Activated T-helper 1 cell treated with anti-CD3 and anti-CD28 coated beads, Interleukin-12 subunit alpha, Interleukin-12 subunit beta, Interleukin-2, Interleukin-4 antibody, amounts not matched to agents 30 ng/mL and 10 ng/mL and 1 ng/mL, durations not matched to agents 14 hours and 24 hours and 36 hours (primary cell): ENCODE measurements at regions of chr12 and their contacts with region 1.

Region 1: DNA sequence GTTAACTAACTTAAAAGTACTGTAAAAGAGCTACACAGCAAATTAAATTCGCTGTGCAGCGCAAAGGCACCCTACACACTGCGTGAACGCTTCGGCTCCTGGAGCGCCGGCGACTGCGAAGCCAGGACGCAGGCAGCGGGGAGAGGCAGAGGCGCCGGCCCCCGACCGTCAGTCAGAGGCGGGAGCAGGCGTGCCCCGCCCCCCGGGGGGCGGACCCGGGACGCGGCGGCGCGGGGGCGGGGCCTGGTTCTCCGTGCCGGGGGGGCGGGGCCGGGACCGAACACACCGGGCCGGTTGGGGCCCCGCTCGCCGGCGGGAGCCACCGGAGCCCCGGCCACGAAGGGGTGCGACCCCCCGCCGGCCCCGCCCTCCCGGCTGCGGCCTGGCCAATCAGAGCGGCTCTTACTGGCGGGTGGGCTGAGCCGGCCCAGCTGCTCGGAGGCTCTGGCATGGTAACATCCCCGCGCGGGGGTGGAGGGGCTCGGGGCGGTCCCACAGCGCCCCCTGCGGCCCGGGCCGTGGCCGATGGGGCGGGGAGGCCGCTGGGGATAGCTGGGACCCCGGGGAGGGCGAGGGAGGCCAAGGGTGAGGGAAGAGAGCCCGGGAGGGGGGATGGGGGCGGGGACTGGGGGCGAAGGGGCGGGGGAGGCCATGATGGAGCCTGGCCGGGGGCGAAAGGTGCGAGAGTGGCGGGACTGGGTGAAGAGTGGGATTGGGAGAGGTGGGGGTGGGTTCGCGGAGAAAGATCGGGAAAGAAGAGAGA is at the start of gene PRPF40B:
- DNase-seq: peak; percentile 81
- H3K4me3 Mint-ChIP-seq: peak within 1 kb of the TSS; percentile 83
- H3K27ac Mint-ChIP-seq: peak within 1 kb of the TSS; percentile 81
- H3K4me1 Mint-ChIP-seq: peaks cover 26% of the 10 kb centered on the region
- H3K27me3 Mint-ChIP-seq: peaks cover 18% of the 10 kb centered on the region
- total RNA-seq, gene PRPF40B: 10.4 and 12.7 TPM in 2 replicates

Region 2: DNA sequence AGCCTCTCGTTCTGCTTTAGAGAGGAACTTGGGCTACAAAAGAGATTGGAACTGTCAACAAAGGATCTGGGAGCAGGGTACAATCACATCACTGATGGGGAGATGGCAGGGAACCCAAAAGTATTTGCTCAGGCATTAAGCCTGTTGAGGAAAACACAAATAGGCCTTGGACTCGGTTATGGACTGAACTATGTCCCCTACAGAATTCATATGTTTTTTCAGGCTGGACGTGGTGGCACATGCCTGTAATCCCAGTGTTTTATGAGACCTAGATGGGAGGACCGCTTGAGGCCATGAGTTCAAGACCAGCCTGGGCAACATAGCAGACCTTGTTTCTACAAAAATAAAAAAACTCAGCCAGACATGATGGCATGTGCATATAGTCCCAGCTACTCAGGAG is 785.3 kb before region 1 on chr12:
- intact Hi-C with region 1: no loop called
- DNase-seq: no peak
- H3K4me3 Mint-ChIP-seq: no peak overlapping the region
- H3K27ac Mint-ChIP-seq: no peak overlapping the region
- H3K4me1 Mint-ChIP-seq: no peaks in the 10 kb centered on the region
- H3K27me3 Mint-ChIP-seq: no peaks in the 10 kb centered on the region

Region 3: DNA sequence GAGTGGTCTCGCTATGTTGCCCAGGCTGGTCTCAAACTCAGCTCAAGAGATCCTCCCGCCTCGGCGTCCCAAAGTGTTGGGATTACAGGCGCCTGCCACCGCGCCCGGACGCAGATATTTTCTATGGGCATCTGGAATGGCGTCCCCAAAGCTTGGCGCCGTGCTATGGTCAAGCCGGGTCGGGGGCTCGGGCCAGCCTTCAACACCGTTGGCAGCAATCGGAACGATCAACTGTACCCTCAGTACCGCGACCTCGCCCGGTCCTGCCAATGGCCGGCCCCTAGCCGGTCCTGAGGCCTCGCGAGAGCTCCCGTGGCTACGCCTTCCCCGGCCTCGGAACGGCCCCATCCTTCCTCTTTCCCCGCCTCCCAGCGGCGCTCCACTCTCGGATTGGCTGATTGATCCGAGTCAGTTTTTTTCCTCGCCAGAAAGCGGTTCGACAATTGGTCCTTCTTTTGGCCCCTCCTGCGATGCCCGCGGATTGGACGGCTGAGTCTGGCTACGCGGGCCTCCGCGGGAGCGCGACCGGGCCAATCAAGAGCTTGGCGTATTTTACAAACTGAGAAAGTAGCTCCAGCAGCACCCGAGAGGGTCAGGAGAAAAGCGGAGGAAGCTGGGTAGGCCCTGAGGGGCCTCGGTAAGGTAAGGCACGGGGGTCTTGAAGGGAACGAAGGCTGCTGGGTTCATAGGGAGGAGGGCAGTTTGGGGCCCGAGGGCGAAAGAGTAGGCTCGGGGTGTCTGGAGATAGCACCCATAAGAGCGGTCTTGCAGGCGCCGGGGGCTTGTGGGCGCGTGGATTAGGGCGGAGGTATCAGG is 300.4 kb before region 1 on chr12 and contains the start of gene TROAP:
- intact Hi-C with region 1: loop called (anchors 1 kb)
- DNase-seq: peak; percentile 97
- H3K4me3 Mint-ChIP-seq: peak within 1 kb of the TSS; percentile 96
- H3K27ac Mint-ChIP-seq: peak within 1 kb of the TSS; percentile 94
- H3K4me1 Mint-ChIP-seq: peaks cover 28% of the 10 kb centered on the region
- H3K27me3 Mint-ChIP-seq: peaks cover 4% of the 10 kb centered on the region
- total RNA-seq, gene TROAP: 46.0 TPM in 2 replicates

Region 4: GRCh38 chr12:49538510-49539403 is 84.6 kb before region 1 on chr12 and contains the start of gene KCNH3:
- intact Hi-C with region 1: loop called (anchors 5 kb)
- DNase-seq: peak; percentile 80
- H3K4me3 Mint-ChIP-seq: peak within 1 kb of the TSS; percentile 70
- H3K27ac Mint-ChIP-seq: no peak within 1 kb of the TSS
- H3K4me1 Mint-ChIP-seq: no peaks in the 10 kb centered on the region
- H3K27me3 Mint-ChIP-seq: peaks cover 49% of the 10 kb centered on the region
- total RNA-seq, gene KCNH3: 0.93 and 1.6 TPM in 2 replicates

Region 5: GRCh38 chr12:49577589-49578315 is 45.6 kb before region 1 on chr12:
- intact Hi-C with region 1: no loop called
- DNase-seq: no peak
- H3K4me3 Mint-ChIP-seq: no peak overlapping the region
- H3K27ac Mint-ChIP-seq: no peak overlapping the region
- H3K4me1 Mint-ChIP-seq: peaks cover 23% of the 10 kb centered on the region
- H3K27me3 Mint-ChIP-seq: no peaks in the 10 kb centered on the region

Region 6: GRCh38 chr12:49588721-49589516 is 34.4 kb before region 1 on chr12:
- intact Hi-C with region 1: no loop called
- DNase-seq: no peak
- H3K4me3 Mint-ChIP-seq: no peak overlapping the region
- H3K27ac Mint-ChIP-seq: no peak overlapping the region
- H3K4me1 Mint-ChIP-seq: no peaks in the 10 kb centered on the region
- H3K27me3 Mint-ChIP-seq: no peaks in the 10 kb centered on the region

Region 7: DNA sequence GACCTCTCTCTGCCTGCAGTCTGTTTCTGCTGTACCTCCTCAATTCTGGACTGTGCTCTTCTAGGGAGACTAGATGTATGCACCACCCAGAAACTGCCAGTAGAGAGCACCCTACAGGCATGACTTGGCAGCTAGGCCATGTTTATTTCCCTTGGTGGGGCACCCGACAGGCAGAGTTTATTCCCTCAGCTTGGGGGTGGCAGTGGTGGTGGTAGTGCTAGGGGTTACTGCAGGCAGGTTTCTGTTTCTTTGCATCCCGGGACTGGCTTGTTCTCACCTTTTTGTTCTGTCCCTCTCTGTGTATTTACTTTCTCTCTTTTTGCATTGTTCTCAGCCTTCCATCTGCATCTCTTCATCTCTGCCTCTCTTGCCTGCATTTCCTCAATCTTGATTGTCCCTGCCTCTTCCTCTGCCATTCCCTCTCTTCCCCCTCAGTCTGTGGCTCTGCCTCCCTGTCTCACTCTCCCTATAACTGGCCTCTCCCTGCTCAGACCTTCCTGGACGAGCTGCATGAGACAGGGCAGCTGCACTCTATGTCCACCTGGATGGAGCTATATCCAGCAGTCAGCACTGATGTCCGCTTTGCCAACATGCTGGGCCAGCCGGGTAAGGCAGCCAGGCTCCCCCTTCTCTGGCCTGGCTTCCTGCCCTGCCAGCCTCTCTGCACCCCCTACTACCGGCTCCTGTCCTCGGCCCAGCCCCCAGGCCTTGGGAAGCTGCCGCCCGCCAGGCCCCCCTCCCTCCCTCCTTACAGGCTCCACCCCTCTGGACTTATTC is 13.8 kb after region 1 on chr12:
- intact Hi-C with region 1: loop called (anchors 1 kb)
- DNase-seq: peak; percentile 54
- H3K4me3 Mint-ChIP-seq: no peak overlapping the region
- H3K27ac Mint-ChIP-seq: peak overlapping the region; percentile 24
- H3K4me1 Mint-ChIP-seq: peaks cover 11% of the 10 kb centered on the region
- H3K27me3 Mint-ChIP-seq: no peaks in the 10 kb centered on the region

Region 8: GRCh38 chr12:49707128-49707811 is 83.9 kb after region 1 on chr12 and contains the start of gene FMNL3:
- intact Hi-C with region 1: loop called (anchors 1 kb)
- DNase-seq: peak; percentile 98
- H3K4me3 Mint-ChIP-seq: peak within 1 kb of the TSS; percentile 96
- H3K27ac Mint-ChIP-seq: peak within 1 kb of the TSS; percentile 89
- H3K4me1 Mint-ChIP-seq: peaks cover 48% of the 10 kb centered on the region
- H3K27me3 Mint-ChIP-seq: peaks cover 20% of the 10 kb centered on the region
- total RNA-seq, gene FMNL3: 43.0 and 46.1 TPM in 2 replicates

Region 9: DNA sequence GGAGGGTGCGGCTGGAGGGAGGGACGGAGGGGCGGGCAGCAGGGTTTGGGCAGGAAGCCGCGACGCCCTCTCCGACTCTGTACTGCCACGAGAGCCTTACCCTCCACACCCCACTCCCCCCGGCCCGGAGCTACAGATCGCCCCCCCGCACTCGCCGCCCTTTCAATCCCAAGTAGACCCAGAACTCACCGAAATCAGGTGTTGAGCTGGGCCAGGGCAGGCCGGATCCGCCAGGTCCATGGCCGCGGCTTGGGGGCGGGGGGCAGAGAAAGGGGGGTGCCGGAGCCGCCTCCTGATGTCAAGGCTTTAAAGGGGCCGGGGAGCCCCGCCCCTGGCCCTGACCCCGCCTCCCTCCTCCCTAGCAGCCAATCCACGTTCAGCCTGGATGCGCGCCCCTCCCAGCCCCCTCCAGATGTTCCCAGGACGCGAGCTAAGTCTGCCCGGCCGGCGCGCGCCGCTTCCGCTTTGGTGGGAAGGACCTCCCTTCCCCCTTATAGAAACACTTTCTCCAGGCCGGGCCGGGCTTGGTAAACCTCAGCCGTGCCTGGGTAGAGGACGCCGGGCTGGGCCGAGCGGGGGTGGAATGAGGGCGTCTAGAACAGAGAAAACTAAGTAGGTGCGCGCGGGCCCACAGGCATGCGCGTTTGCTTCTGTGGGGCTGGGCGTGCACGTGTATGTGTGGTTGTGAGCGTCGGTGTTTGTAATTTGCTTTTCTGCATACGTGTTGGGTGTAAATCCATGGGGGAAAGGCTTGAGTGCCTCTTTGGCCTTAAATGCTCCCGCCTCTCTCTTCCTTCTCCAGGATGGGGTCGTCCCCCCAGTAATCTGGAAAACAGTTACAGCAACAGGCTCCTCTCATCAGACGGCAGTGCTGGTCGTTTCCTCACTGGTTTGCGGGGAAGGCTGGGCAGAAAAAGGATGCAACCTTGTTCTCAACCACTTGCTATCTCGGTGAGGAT is 205.1 kb after region 1 on chr12 and contains the start of gene NCKAP5L:
- intact Hi-C with region 1: loop called (anchors 1 kb)
- DNase-seq: peak; percentile 86
- H3K4me3 Mint-ChIP-seq: peak within 1 kb of the TSS; percentile 96
- H3K27ac Mint-ChIP-seq: peak within 1 kb of the TSS; percentile 91
- H3K4me1 Mint-ChIP-seq: peaks cover 28% of the 10 kb centered on the region
- H3K27me3 Mint-ChIP-seq: peaks cover 24% of the 10 kb centered on the region
- total RNA-seq, gene NCKAP5L: 3.8 TPM in 2 replicates

Region 10: DNA sequence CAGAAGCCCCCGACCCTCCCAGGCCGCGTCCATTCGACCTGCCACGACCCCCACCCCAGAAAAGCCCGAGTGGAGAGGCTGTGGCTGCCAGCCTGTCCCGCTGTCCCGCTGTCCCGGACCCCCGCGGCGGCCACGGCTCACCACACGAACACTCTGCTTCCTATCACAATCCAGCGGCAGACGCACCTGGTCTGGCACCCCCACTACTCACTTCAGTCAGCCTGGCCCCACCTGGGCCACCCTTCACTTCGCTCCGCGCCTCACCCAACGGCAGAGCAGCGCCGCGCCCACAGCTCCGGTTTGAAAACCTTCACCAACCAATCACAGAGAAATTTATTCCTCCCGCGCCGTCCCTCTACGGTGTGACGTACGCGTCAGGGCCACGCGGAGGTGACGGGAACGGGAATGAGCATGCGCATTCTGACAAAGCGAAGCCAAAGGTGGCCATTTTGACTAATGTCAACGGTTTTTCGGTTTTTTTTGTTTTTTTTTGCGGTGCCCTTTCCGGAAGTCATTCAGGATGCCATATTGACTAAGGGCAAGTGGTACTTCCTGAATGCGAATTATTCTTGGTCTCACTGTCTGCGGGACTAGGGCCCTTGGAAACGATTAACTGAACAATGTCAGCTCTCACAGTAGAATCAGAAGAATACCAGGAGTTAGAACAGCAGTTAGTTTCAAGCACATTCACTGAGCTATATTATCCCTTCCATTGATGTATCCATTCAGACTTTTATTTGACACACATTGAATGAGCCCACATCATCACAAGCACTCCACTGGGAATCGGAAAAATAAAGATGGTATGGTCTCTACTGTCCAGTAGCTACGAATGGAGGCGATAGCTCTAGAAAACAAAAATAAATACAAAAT is 402.1 kb after region 1 on chr12 and contains the start of gene RACGAP1:
- intact Hi-C with region 1: loop called (anchors 10 kb)
- DNase-seq: peak; percentile 98
- H3K4me3 Mint-ChIP-seq: peak within 1 kb of the TSS; percentile 98
- H3K27ac Mint-ChIP-seq: peak within 1 kb of the TSS; percentile 99
- H3K4me1 Mint-ChIP-seq: peaks cover 46% of the 10 kb centered on the region
- H3K27me3 Mint-ChIP-seq: peaks cover 3% of the 10 kb centered on the region
- total RNA-seq, gene RACGAP1: 68.1 and 71.2 TPM in 2 replicates

Region 11: GRCh38 chr12:50055831-50056638 is 432.7 kb after region 1 on chr12:
- intact Hi-C with region 1: no loop called
- DNase-seq: peak; percentile 34
- H3K4me3 Mint-ChIP-seq: peak overlapping the region; percentile 45
- H3K27ac Mint-ChIP-seq: peak overlapping the region; percentile 52
- H3K4me1 Mint-ChIP-seq: peaks cover 39% of the 10 kb centered on the region
- H3K27me3 Mint-ChIP-seq: peaks cover 57% of the 10 kb centered on the region